ENCODE measurements at regions of chr2 and their contacts with region 1.

Region 1: DNA sequence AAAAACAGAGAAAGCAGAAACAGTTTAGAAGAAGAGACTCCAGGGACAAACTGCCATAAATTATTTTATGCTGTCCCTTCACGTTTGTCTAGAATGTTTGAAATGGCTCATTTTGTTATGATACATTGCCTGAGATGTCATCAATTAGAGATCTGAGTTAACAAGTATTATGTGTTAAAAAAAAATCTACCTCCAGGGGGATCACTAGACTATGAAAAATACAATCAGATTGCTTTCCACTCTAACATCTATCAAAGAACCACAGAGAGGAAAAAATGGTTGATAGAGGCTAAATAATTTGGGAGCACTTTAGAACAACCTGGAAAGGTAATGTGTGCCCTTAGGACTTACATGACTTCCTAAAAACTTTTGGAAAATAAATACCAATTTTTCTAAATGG is 103.8 kb upstream of the CCDC150 start:
- DNase-seq: no peak

Region 2: DNA sequence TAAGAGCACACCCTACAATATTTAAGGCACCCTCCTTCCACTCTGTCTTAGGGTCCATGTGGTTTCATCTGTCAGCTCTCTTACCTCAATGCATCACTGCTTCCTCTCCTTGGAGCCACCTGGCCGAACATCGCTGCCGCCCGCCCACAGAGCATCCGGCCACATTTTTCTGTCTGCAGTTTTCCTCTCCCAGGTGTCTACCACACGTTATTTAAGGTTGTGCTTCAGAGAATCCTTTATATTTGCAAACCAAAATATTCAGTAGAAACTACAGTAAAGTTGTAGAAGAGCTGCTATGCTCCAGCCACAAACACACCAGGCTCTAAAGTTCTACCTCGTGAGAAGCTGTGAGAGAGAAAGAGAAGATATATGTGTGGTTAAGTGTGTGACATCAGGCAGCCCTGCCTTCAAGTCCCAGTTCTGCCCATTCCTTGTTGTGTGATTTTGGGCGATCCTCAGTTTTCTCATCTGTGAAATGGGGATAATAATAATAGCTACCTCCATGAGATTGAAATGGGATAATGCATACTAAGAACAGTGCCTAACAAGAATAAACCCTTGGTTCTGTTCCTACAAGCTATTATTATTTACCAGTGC is 359.5 kb before region 1 on chr2:
- intact Hi-C with region 1: no loop called
- DNase-seq: no peak

Region 3: GRCh38 chr2:196479350-196479749 is 56.4 kb before region 1 on chr2:
- intact Hi-C with region 1: loop called (anchors 5 kb)
- DNase-seq: no peak

Region 4: GRCh38 chr2:196592912-196593881 is 57.5 kb after region 1 on chr2:
- intact Hi-C with region 1: loop called (anchors 5 kb)
- DNase-seq: peak; percentile 77